GM12878 (cell line): ENCODE measurements at regions of chr10 and their contacts with region 1.

Region 1: GRCh38 chr10:101889256-101890210 is 45.9 kb upstream of the KCNIP2 start:
- DNase-seq: peak; percentile 66
- ATAC-seq: peak; percentile 93
- H3K4me3 ChIP-seq: 0 out of 2 replicates have a peak overlapping the region, but pooled peaks have one; percentile 29
- H3K27ac ChIP-seq: peak overlapping the region; percentile 67
- H3K4me1 ChIP-seq: peaks cover 22% of the 10 kb centered on the region
- H3K27me3 ChIP-seq: no peaks in the 10 kb centered on the region
- CTCF ChIP-seq: peak; percentile 86 to 93 (median 91)
- EP300 ChIP-seq: no peak
- POLR2A ChIP-seq: no peak
- RAD21 ChIP-seq: peak; percentile 98

Region 2: GRCh38 chr10:101858723-101859500 is 30.6 kb before region 1 on chr10:
- CTCF ChIA-PET with region 1: interaction called, 36 read pairs
- POLR2A ChIA-PET with region 1: interaction called, 4 read pairs
- RAD21 ChIA-PET with region 1: interaction called, 18 read pairs
- SMC1A ChIA-PET with region 1: interaction called, 25 read pairs
- in situ Hi-C with region 1: no loop called
- intact Hi-C with region 1: no loop called
- DNase-seq: peak; percentile 61
- ATAC-seq: peak; percentile 91
- H3K4me3 ChIP-seq: peak overlapping the region; percentile 28; the same call in 1 of the 2 replicates
- H3K27ac ChIP-seq: peak overlapping the region; percentile 83
- H3K4me1 ChIP-seq: peaks cover 32% of the 10 kb centered on the region
- H3K27me3 ChIP-seq: no peaks in the 10 kb centered on the region
- CTCF ChIP-seq: no peak
- EP300 ChIP-seq: peak in 1 of 2 experiments; percentile 37; a peak in 1 of 4 replicates
- POLR2A ChIP-seq: peak; percentile 45; the same call in 1 of the 2 replicates
- RAD21 ChIP-seq: no peak

Region 3: GRCh38 chr10:101968940-101969321 is 79.4 kb after region 1 on chr10:
- CTCF ChIA-PET with region 1: interaction called, 28 read pairs
- POLR2A ChIA-PET with region 1: interaction called, 9 read pairs
- RAD21 ChIA-PET with region 1: interaction called, 60 read pairs
- SMC1A ChIA-PET with region 1: interaction called, 17 read pairs
- in situ Hi-C with region 1: no loop called
- intact Hi-C with region 1: no loop called
- DNase-seq: peak; percentile 76
- ATAC-seq: peak; percentile 72
- H3K4me3 ChIP-seq: no peak overlapping the region
- H3K27ac ChIP-seq: peak overlapping the region; percentile 99
- H3K4me1 ChIP-seq: peaks cover 80% of the 10 kb centered on the region
- H3K27me3 ChIP-seq: no peaks in the 10 kb centered on the region
- CTCF ChIP-seq: no peak
- EP300 ChIP-seq: peak in 1 of 2 experiments; percentile 74
- POLR2A ChIP-seq: no peak
- RAD21 ChIP-seq: no peak

Region 4: GRCh38 chr10:101995451-101996063 is 106.0 kb after region 1 on chr10:
- CTCF ChIA-PET with region 1: interaction called, 543 read pairs
- POLR2A ChIA-PET with region 1: interaction called, 18 read pairs
- RAD21 ChIA-PET with region 1: interaction called, 467 read pairs
- SMC1A ChIA-PET with region 1: interaction called, 53 read pairs
- in situ Hi-C with region 1: no loop called
- intact Hi-C with region 1: no loop called
- DNase-seq: no peak
- ATAC-seq: no peak
- H3K4me3 ChIP-seq: no peak overlapping the region
- H3K27ac ChIP-seq: peak overlapping the region; percentile 13; the same call in 1 of the 2 replicates
- H3K4me1 ChIP-seq: peaks cover 21% of the 10 kb centered on the region
- H3K27me3 ChIP-seq: no peaks in the 10 kb centered on the region
- CTCF ChIP-seq: no peak
- EP300 ChIP-seq: no peak
- POLR2A ChIP-seq: no peak
- RAD21 ChIP-seq: no peak

Region 5: DNA sequence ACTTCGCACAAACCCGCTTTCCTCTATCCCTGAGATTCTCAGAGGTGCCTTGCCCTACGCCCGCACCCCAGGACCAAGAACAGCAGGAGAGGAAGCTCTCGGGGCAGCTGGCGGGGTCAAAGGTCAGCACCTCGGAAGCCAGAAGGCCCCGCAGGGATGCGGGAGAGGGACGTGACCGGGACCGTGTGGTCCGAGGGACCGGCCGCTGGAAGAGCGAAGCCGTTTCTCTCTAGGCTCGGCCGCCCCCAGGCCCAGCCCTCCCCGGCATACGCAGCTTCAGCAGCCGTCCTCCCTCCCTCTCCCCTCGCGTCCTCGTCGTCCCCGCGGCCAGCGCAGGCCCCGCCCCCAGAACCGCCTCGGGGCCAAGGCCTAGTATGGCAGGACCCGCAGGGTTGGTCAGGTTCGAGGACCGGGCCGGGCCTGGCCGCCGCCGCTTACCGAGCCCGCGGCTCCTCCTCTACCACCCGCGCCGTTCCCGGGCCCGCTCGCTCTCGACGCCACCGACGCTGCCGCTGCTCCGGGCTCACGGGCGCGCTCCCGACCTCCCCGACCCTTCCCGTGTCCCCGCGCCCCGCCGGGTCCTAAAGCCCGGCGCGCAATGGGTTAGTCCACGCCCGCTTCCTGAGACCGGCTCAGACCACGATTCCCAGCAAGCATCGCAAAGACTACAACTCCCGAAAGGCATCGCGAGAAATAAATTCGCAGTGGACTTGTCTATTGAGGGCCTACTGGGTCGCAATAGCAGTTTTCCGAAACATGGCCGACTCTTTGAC is 166.3 kb after region 1 on chr10 and contains the start of gene ARMH3:
- CTCF ChIA-PET with region 1: interaction called, 13 read pairs
- POLR2A ChIA-PET with region 1: interaction called, 3 read pairs
- RAD21 ChIA-PET with region 1: interaction called, 3 read pairs
- SMC1A ChIA-PET with region 1: interaction called, 6 read pairs
- in situ Hi-C with region 1: no loop called
- intact Hi-C with region 1: no loop called
- DNase-seq: peak; percentile 87
- ATAC-seq: peak; percentile 98
- H3K4me3 ChIP-seq: peak within 1 kb of the TSS; percentile 93
- H3K27ac ChIP-seq: peak within 1 kb of the TSS; percentile 77
- H3K4me1 ChIP-seq: 0 out of 2 replicates have a peak, but pooled peaks cover 9% of the 10 kb centered on the region
- H3K27me3 ChIP-seq: no peaks in the 10 kb centered on the region
- CTCF ChIP-seq: no peak
- EP300 ChIP-seq: no peak
- POLR2A ChIP-seq: peak; percentile 83
- RAD21 ChIP-seq: no peak
- polyA plus RNA-seq, gene ARMH3: 13.6 to 14.0 TPM

Region 6: DNA sequence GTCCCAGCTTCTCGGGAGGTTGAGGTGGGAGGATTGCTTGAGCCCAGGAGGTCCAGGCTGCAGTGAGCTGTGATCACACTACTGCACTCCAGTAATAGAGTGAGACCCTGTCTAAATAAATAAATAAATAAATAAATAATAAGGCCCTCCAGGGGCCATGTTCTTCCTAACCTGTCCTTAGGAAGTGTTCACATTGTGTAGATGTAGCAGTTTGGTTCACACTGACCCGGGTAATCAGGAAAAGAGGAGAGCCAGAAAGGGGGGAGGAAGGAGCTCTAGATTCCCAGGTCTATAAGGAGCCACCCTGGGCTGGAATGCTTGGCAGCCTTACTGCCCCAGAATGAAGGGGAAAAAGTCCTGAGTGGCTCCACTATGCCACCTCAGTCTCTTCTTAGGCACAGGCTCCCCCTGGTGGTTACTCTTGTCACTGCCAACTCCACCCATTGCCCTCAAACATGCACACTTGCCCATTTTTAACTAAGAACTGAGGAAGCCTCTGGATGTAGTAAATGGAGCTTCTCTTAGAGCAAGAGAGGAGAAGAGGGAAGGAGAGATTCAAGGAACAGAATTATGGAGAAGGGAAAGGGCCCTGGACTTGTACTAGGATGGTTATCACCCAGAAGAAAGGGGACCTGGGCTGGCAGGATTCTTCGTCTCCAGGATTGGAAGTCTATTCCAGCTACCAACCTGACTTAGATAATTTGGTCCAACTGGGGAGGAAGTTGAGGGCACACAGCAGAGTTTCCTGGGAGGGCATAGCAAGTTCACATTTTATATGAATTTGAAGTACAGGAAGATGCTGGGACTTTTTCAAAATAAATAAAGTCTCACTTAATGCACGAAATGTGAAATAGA is 183.4 kb after region 1 on chr10:
- CTCF ChIA-PET with region 1: interaction called, 17 read pairs
- POLR2A ChIA-PET with region 1: no interaction called
- RAD21 ChIA-PET with region 1: interaction called, 20 read pairs
- SMC1A ChIA-PET with region 1: interaction called, 37 read pairs
- in situ Hi-C with region 1: no loop called
- intact Hi-C with region 1: loop called (anchors 1 kb)
- DNase-seq: no peak
- ATAC-seq: peak; percentile 99
- H3K4me3 ChIP-seq: no peak overlapping the region
- H3K27ac ChIP-seq: no peak overlapping the region
- H3K4me1 ChIP-seq: no peaks in the 10 kb centered on the region
- H3K27me3 ChIP-seq: no peaks in the 10 kb centered on the region
- CTCF ChIP-seq: peak; percentile 94 to 96 (median 95)
- EP300 ChIP-seq: no peak
- POLR2A ChIP-seq: no peak
- RAD21 ChIP-seq: peak; percentile 92